ENCODE measurements at regions of chr15 and their contacts with region 1.

Region 1: DNA sequence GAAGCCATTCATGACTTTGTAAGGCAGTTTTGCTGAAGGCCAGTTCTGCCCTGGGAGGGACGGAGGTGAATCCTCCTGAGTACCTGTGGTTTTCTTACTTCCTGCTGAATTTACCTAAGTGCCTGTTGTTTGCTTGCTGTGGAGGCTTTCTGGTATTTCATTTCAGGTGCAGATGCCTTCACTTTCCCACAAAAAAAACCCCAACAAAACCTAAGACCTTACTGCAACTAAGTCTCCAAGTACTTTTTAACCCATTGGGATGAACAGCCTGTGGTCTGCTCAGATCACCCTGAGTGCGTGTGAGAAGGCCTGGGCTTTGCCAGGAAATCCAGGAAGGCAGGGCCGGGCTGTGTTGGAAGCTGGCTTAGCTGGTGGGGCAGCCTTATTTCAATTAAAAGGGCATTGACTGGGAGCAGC is 65.3 kb downstream of the IGF1R start:
- DNase-seq: no peak
- ATAC-seq: no peak
- H3K4me3 ChIP-seq: no peak overlapping the region
- H3K27ac ChIP-seq: peak overlapping the region in 1 of 4 donors; percentile 37
- H3K4me1 ChIP-seq: peaks cover 32 to 49% of the 10 kb centered on the region in 2 donors
- H3K27me3 ChIP-seq: no peaks in the 10 kb centered on the region
- CTCF ChIP-seq: no peak
- POLR2A ChIP-seq: no peak

Region 2: GRCh38 chr15:98599909-98600691 is 113.5 kb before region 1 on chr15:
- in situ Hi-C with region 1: loop called in 1 of 4 experiments (anchors 25 kb)
- intact Hi-C with region 1: no loop called
- DNase-seq: no peak
- ATAC-seq: no peak
- H3K4me3 ChIP-seq: peak overlapping the region in 2 of 4 donors; percentile 27 to 39
- H3K27ac ChIP-seq: no peak overlapping the region
- H3K4me1 ChIP-seq: no peaks in the 10 kb centered on the region
- H3K27me3 ChIP-seq: peaks cover 8 to 28% (median 13%) of the 10 kb centered on the region in 3 donors
- CTCF ChIP-seq: no peak
- POLR2A ChIP-seq: no peak

Region 3: DNA sequence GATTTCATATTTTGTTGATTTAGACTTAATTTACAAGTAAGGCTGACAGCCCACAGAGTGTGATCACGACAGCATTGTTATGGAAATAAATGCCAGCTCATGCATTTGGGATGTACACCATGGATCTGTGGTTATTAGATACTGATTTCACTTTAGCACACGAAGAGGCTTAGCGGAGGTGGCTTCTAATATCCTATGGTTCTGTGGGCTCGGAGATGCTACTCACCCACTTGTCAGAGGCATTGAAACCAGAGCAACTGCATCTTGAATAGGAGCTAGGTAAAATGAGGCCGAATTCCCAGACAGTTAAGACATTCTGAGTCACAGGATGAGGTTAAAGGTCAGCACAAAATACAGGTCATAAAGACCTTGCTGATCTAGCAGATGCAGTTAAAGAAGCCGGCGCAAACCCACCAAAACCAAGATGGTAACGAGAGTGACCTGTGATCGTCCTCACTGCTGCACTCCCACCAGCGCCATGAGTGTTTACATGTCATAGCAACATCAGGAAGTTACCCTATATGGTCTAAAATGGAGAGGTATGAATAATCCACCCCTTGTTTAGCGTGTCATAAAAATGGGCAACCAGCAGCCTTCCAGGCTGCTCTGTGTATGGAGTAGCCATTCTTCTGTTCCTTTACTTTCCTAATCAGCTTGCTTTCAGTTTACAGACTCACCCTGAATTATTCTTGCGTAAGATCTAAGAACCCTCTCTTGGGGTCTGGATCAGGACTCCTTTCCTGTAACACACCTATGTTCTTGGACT is 176.5 kb after region 1 on chr15:
- in situ Hi-C with region 1: no loop called
- intact Hi-C with region 1: no loop called
- DNase-seq: no peak
- ATAC-seq: no peak
- H3K4me3 ChIP-seq: no peak overlapping the region
- H3K27ac ChIP-seq: no peak overlapping the region
- H3K4me1 ChIP-seq: peaks cover 3 to 4% of the 10 kb centered on the region in 2 donors
- H3K27me3 ChIP-seq: no peaks in the 10 kb centered on the region
- CTCF ChIP-seq: no peak
- POLR2A ChIP-seq: no peak

Measured in gastrocnemius medialis (tissue), 4 donors.